Caco-2 (cell line): ENCODE measurements at regions of chr15 and their contacts with region 1.

Region 1: DNA sequence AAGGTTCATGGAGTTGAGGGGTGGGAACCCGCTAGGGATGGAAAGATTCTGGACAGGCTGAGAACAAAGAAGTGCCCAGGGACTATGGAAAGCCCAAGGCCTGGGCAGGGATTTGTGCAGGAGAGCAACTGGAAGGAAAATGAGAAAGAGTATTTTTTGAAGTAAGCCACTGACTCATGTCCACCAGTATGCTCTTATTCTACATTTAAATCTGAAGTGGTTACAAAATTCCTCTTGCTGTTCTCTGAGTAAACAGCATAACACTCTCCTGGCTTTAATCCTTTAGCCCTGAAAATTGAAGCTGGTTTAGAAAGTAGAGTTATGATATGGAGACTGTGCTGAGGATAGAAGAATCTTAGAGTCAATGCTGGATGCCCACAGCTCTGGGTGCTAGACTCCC is 165.2 kb downstream of the ISL2 start:
- DNase-seq: no peak
- H3K4me3 ChIP-seq: no peak overlapping the region
- H3K4me3 Mint-ChIP-seq: no peak overlapping the region
- H3K27ac Mint-ChIP-seq: no peak overlapping the region
- H3K4me1 ChIP-seq: no peaks in the 10 kb centered on the region
- H3K4me1 Mint-ChIP-seq: no peaks in the 10 kb centered on the region
- H3K27me3 ChIP-seq: no peaks in the 10 kb centered on the region
- H3K27me3 Mint-ChIP-seq: no peaks in the 10 kb centered on the region
- CTCF ChIP-seq: no peak

Region 2: GRCh38 chr15:76359152-76359551 is 142.6 kb before region 1 on chr15:
- CTCF ChIA-PET with region 1: no interaction called
- POLR2A ChIA-PET with region 1: no interaction called
- intact Hi-C with region 1: no loop called
- DNase-seq: no peak
- H3K4me3 ChIP-seq: no peak overlapping the region
- H3K4me3 Mint-ChIP-seq: no peak overlapping the region
- H3K27ac Mint-ChIP-seq: no peak overlapping the region
- H3K4me1 ChIP-seq: peaks cover 20% of the 10 kb centered on the region
- H3K4me1 Mint-ChIP-seq: peaks cover 20% of the 10 kb centered on the region
- H3K27me3 ChIP-seq: no peaks in the 10 kb centered on the region
- H3K27me3 Mint-ChIP-seq: no peaks in the 10 kb centered on the region
- CTCF ChIP-seq: no peak

Region 3: DNA sequence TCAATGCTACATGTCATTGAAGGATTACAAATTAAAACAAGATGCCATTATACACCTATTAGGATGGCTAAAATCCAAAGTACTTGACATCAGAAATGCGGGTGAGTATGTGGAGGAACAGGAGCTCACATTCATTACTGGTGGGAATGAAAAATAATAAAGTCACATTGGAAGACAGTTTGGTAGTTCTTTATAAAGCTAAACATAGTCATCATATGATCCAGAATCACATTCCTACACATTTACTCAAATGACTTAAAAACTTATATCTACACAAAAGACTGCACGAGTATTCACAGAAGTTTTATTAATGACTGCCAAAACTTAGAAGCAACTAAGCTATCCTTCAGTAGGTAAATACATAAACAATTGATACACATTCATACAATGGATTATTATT is 18.0 kb before region 1 on chr15:
- CTCF ChIA-PET with region 1: no interaction called
- POLR2A ChIA-PET with region 1: no interaction called
- intact Hi-C with region 1: loop called (anchors 2 kb)
- DNase-seq: no peak
- H3K4me3 ChIP-seq: no peak overlapping the region
- H3K4me3 Mint-ChIP-seq: no peak overlapping the region
- H3K27ac Mint-ChIP-seq: no peak overlapping the region
- H3K4me1 ChIP-seq: no peaks in the 10 kb centered on the region
- H3K4me1 Mint-ChIP-seq: no peaks in the 10 kb centered on the region
- H3K27me3 ChIP-seq: no peaks in the 10 kb centered on the region
- H3K27me3 Mint-ChIP-seq: no peaks in the 10 kb centered on the region
- CTCF ChIP-seq: no peak